Heart left ventricle (tissue), 16 donors: ENCODE measurements at regions of chr17 and their contacts with region 1.

Region 1: GRCh38 chr17:46940621-46941404 is 17.9 kb downstream of the GOSR2 start:
- DNase-seq: peak; percentile 72 to 79 (median 76)
- ATAC-seq: peak; percentile 70 to 84 (median 82)
- H3K4me3 ChIP-seq: no peak overlapping the region
- H3K27ac ChIP-seq: no peak overlapping the region
- H3K4me1 ChIP-seq: peaks cover 4 to 27% (median 20%) of the 10 kb centered on the region in 12 donors
- H3K27me3 ChIP-seq: no peaks in the 10 kb centered on the region
- CTCF ChIP-seq: peak; percentile 75 to 87 (median 83)
- POLR2A ChIP-seq: no peak

Region 2: DNA sequence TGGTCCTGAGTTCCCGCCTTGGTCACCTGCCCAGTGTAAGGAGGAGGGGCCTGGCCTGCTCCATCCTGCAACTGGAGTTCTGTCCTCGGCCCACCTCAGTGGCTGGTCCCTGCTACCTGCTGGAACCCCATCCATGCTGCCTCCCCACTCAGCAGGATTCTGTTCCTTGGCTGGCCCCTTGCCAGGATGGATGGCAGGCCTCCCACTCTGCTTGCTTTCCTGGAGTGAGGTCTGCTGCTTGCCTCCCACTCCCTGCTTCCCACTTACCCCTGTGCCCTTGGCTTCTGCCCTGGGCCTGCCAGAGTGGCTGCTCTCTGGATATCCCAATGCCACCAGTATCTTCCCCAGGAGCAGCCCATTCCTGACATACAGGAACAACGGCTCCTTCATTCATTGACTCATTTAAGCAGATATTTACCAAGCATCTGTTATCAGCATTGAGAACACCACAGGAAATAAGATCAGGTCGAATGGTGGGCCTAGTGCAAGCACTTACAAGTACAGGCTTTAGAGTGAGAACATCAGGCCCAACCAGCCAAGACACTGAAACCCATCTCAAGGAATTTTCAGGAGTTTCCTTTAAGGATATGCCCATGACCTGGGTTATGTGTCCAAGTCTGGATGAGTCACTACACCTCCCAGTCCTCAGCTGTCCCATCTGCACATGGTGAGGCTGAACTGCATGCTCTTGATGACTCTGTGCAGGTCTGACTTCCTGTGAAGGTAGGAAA is 55.2 kb after region 1 on chr17:
- intact Hi-C with region 1: loop called in 9 of 10 experiments (anchors 2 to 5 kb)
- DNase-seq: no peak
- ATAC-seq: peak in 1 of 4 donors; percentile 14
- H3K4me3 ChIP-seq: no peak overlapping the region
- H3K27ac ChIP-seq: no peak overlapping the region
- H3K4me1 ChIP-seq: peaks cover 0 to 2% (median 0%) of the 10 kb centered on the region in 12 donors
- H3K27me3 ChIP-seq: no peaks in the 10 kb centered on the region
- CTCF ChIP-seq: no peak
- POLR2A ChIP-seq: no peak

Region 3: DNA sequence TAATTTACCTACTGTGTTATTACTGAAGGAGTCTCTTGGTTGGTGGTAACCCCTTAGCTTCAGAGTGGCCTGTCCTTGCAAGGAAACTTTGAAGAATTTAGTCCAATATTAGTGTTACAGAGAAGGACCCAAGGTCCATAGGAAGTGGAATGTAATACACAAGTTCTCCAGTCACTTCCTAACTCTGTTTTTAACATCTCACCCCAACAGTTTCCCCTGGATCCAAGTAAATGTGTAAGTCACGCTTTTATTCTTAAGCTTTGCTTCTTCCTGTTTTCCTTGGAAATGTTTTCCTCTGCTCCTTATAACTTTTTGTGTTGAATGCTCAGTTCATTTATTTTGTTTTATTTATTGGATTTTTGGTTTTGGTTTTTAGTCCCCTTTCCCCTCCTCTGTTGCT is 64.1 kb after region 1 on chr17:
- intact Hi-C with region 1: loop called in 8 of 10 experiments (anchors 2 to 5 kb)
- DNase-seq: no peak
- ATAC-seq: no peak
- H3K4me3 ChIP-seq: no peak overlapping the region
- H3K27ac ChIP-seq: peak overlapping the region in 8 of 12 donors; percentile 0 to 67 (median 44)
- H3K4me1 ChIP-seq: peaks cover 0 to 18% (median 3%) of the 10 kb centered on the region in 12 donors
- H3K27me3 ChIP-seq: no peaks in the 10 kb centered on the region
- CTCF ChIP-seq: no peak
- POLR2A ChIP-seq: no peak

Region 4: DNA sequence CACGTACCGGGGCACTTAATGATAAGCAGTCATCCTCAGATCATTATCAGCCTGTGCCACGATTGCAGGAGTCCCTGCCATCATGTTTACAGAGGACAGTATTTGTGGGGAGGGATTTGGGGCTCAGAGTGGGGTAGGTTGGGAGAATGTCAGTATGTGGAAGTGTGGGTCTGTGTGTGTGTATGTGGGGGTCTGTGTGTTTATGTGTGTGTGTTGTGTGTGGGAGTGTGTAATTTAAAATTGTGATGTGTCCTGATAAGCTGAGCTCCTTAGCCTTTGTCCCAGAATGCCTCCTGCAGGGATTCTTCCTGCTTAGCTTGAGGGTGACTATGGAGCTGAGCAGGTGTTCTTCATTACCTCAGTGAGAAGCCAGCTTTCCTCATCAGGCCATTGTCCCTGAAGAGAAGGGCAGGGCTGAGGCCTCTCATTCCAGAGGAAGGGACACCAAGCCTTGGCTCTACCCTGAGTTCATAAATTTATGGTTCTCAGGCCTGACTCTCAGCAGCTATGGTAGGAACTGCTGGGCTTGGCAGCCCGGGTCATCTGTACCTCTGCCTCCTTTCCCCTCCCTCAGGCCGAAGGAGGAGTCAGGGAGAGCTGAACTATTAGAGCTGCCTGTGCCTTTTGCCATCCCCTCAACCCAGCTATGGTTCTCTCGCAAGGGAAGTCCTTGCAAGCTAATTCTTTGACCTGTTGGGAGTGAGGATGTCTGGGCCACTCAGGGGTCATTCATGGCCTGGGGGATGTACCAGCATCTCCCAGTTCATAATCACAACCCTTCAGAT is 369.6 kb after region 1 on chr17:
- intact Hi-C with region 1: loop called in 1 of 10 experiments (anchors 5 kb)
- DNase-seq: no peak
- ATAC-seq: no peak
- H3K4me3 ChIP-seq: no peak overlapping the region
- H3K27ac ChIP-seq: no peak overlapping the region
- H3K4me1 ChIP-seq: peaks cover 0 to 17% (median 3%) of the 10 kb centered on the region in 12 donors
- H3K27me3 ChIP-seq: no peaks in the 10 kb centered on the region
- CTCF ChIP-seq: no peak
- POLR2A ChIP-seq: no peak